ENCODE measurements at regions of chr17 and their contacts with region 1.

Region 1: GRCh38 chr17:40287494-40288369 is at the start of gene CDC6:
- DNase-seq: peak; percentile 90 to 99 (median 98)
- ATAC-seq: peak; percentile 97
- H3K4me3 ChIP-seq: peak within 1 kb of the TSS; percentile 70
- H3K4me3 Mint-ChIP-seq: peak within 1 kb of the TSS; percentile 93 to 99 (median 96)
- H3K27ac ChIP-seq: peak within 1 kb of the TSS; percentile 63
- H3K27ac Mint-ChIP-seq: peak within 1 kb of the TSS; percentile 84 to 98 (median 91)
- H3K4me1 ChIP-seq: peaks cover 3 to 11% of the 10 kb centered on the region in 2 donors
- H3K4me1 Mint-ChIP-seq: peaks cover 8 to 41% (median 22%) of the 10 kb centered on the region in 7 donors
- H3K27me3 ChIP-seq: no peaks in the 10 kb centered on the region
- H3K27me3 Mint-ChIP-seq: no peaks in the 10 kb centered on the region
- total RNA-seq, gene CDC6: 0.51 to 73.6 (median 0.85) TPM

Region 2: GRCh38 chr17:40168262-40168832 is 119.4 kb before region 1 on chr17:
- CTCF ChIA-PET with region 1: no interaction called
- POLR2A ChIA-PET with region 1: no interaction called
- intact Hi-C with region 1: no loop called
- DNase-seq: peak in 7 of 9 donors; percentile 40 to 70 (median 62)
- ATAC-seq: peak; percentile 90
- H3K4me3 ChIP-seq: no peak overlapping the region
- H3K4me3 Mint-ChIP-seq: no peak overlapping the region
- H3K27ac ChIP-seq: peak overlapping the region; percentile 42
- H3K27ac Mint-ChIP-seq: peak overlapping the region; percentile 44 to 93 (median 81)
- H3K4me1 ChIP-seq: no peaks in the 10 kb centered on the region
- H3K4me1 Mint-ChIP-seq: peaks cover 9 to 20% (median 15%) of the 10 kb centered on the region in 7 donors
- H3K27me3 ChIP-seq: no peaks in the 10 kb centered on the region
- H3K27me3 Mint-ChIP-seq: no peaks in the 10 kb centered on the region

Region 3: DNA sequence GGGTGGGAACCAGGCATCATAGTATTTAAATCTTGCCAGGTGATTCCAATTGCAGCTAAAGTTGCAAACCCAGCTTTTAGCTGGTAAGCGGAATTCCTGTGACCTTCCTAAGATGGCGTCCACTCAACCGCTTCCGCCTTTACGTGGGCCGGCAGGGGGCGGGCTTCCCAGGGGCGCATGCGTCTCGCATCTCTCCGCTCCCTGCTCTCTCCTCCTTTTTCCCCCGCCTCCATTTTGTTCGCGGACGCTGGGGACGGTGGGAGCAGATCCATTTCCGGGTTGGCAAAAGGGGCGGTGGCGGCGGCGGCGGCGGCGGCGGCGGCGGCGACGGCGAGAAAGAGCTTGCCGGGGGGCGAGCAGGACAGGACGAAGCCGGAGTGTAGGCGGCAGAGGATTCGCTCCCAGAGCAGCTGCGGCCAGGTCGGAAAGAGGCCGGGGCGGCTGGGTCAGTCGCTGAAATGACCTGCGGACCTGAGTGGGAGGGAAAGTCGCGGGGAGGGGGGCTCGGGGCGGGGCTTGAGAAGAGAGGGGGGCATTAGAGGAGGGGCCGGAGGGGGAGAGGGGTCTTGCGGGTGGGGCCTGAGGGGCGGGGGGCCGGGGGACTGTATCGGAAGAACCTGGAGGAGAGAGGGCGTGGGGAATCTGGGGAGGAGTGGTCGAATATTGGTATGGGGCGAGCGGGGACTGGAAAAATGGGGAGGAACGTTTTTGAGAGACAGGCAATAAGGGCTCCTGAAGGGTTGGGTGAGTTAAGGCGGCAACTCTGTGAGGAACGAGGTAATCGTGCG is 68.5 kb before region 1 on chr17 and contains the start of gene WIPF2:
- CTCF ChIA-PET with region 1: interaction called, 4 read pairs
- POLR2A ChIA-PET with region 1: interaction called, 4 read pairs
- intact Hi-C with region 1: loop called (anchors 1 kb)
- DNase-seq: peak; percentile 88 to 97 (median 95)
- ATAC-seq: peak; percentile 96
- H3K4me3 ChIP-seq: peak within 1 kb of the TSS; percentile 74
- H3K4me3 Mint-ChIP-seq: peak within 1 kb of the TSS; percentile 86 to 100 (median 96)
- H3K27ac ChIP-seq: peak within 1 kb of the TSS; percentile 92
- H3K27ac Mint-ChIP-seq: peak within 1 kb of the TSS; percentile 96 to 100 (median 100)
- H3K4me1 ChIP-seq: peaks cover 9 to 10% of the 10 kb centered on the region in 2 donors
- H3K4me1 Mint-ChIP-seq: peaks cover 25 to 44% (median 32%) of the 10 kb centered on the region in 7 donors
- H3K27me3 ChIP-seq: no peaks in the 10 kb centered on the region
- H3K27me3 Mint-ChIP-seq: no peaks in the 10 kb centered on the region
- total RNA-seq, gene WIPF2: 24.8 to 31.8 (median 28.6) TPM

Region 4: DNA sequence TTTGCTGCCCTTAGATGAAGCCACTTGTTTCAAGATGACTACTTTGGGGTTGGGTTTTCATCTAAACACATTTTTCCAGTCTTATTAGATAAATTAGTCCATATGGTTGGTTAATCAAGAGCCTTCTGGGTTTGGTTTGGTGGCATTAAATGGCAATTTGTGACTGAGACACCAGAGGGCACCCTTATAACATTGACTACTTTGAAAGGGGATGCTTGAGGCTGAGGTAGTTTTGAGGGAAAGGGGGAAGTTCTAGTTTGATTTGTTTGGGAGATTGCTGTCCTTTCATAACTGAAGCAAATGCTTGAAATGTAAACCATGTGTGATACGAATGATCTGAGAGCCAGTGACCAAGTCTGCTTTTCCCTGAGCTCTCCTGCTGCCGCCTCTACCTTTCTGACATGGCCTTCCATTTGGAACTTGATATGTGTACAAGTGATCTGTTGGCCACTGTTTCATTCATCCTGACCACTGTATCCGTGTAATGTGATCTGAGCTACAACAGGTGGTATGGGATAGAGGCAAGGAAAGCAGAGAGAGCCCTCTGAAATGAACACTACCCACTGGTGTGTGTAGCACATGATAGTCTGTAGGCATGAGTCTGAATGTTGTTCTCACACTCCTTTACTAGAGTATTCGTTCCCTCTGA is 15.4 kb after region 1 on chr17:
- CTCF ChIA-PET with region 1: interaction called, 16 read pairs
- POLR2A ChIA-PET with region 1: interaction called, 3 read pairs
- intact Hi-C with region 1: no loop called
- DNase-seq: peak in 7 of 9 donors; percentile 43 to 70 (median 64)
- ATAC-seq: peak; percentile 86
- H3K4me3 ChIP-seq: no peak overlapping the region
- H3K4me3 Mint-ChIP-seq: peak overlapping the region in 2 of 10 donors; percentile 8 to 44
- H3K27ac ChIP-seq: no peak overlapping the region
- H3K27ac Mint-ChIP-seq: peak overlapping the region in 7 of 9 donors; percentile 3 to 34 (median 19)
- H3K4me1 ChIP-seq: peaks cover 13 to 28% of the 10 kb centered on the region in 2 donors
- H3K4me1 Mint-ChIP-seq: peaks cover 11 to 21% (median 15%) of the 10 kb centered on the region in 7 donors
- H3K27me3 ChIP-seq: no peaks in the 10 kb centered on the region
- H3K27me3 Mint-ChIP-seq: no peaks in the 10 kb centered on the region

Measured in naive thymus-derived CD4-positive, alpha-beta T cell (primary cell).